Cardiac septum (tissue), 1 donor: ENCODE measurements at regions of chr3 and their contacts with region 1.

Region 1: DNA sequence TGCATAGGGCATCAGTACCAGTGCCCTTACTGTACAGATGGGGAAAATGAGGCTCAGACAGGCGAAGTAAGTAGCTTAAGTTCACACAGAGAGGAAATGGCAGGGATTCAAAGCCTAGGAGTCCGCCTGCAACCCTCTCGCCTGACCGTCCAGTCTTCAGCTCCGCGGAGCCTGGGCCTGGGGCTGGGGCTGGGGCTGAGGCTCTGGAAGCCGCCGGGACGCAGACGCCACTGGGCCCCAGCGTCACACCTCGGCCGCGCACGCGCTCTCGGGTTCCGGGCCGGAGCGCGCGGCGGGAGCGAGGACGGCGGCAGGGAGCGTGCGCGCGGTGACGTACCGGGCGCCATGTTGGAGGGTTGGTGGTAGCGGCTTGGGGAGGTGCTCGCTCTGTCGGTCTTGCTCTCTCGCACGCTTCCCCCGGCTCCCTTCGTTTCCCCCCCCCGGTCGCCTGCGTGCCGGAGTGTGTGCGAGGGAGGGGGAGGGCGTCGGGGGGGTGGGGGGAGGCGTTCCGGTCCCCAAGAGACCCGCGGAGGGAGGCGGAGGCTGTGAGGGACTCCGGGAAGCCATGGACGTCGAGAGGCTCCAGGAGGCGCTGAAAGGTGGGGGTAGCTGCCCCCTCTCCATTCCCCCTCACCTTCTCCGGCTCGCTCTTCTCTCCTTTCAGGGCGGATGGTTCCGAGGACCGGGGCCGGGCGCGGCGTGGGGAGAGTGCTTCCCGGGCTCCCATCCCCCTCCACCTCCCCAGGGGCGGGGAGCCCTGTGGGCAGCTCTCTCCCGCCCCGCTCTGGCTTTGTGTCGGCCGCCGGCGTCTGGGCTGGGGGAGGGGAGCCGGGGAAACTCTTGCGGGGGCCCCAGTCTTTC is at the start of gene PPP4R2:
- DNase-seq: peak; percentile 96
- total RNA-seq, gene PPP4R2: 46.6 TPM

Region 2: DNA sequence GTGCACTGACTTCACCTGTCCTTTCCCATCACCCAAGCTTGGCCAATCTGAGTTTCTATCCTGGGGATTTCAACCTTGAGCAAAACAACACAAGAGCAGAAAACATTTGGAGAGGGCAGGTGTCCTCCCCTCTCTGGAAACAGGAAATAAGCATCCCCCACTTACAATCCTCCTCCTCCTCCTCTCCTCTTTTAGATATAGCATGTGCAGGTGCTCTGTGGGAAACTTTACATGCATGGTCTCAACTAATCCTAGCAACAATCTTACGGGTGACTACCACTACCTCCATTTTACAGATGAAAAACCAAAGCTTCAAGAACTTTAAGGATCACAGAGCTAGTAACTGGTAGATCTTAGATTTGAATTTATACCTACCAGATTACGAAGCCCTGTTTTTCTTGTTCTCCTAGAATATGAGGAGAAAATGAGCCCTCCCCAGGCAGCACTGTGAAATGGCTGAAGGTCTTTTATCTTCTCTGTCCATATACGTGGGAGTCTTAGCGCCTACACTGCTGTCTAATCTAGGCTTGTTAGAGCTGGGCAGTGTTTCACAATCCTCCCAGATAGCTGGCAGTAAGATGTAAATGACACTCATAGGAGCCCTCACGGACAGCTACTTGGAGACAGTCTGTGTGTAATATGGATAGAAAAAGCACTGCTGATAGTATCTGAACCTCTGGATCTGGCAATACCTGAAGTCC is 910.5 kb before region 1 on chr3:
- intact Hi-C with region 1: no loop called
- DNase-seq: no peak

Region 3: DNA sequence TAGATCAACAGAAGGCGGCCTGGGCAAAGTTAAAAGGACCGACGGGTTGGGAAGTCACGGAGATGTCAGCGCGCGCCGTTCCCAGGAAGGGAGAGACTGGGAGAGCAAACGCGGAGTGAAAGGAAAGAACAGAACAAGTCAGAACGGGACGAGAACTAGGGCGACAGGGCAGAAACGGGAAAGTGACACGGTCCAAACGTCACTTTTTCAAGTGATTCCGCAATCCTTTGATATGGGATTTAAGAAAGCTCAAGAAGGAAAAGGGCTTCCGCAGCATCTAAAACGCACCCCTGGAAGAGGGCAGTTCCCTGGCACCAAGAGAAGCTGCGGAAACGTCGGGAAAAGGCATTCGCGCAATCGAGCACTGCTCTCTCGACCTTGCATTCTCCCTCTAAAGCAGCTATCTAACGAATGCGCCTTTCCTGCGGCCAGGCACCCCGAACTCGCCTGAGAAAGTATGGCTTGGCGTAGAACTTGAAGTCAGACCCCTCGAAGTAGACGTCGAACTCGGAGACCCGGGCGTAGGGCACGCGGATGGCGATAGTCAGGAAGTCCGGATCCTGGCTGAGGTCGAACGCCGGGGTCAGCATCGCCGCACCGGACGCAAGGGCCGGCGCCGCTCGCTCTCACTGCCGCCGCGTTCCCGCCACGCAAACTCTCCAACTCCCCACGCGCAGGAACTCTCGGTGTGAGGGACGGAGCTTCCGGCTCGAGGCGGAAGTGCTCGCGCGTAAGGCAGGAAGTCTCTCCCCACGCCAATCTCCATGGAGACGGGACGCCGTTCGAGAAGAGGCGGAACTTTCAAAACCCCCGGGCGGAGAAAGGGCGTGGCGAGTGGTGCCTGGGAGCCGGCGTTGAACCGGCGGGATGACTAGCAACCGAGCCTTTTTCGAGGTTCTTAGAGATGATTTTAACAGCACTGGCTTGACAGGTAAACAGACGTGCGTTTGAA is 148.7 kb before region 1 on chr3 and contains the start of gene SHQ1:
- intact Hi-C with region 1: loop called (anchors 5 kb)
- DNase-seq: peak; percentile 97
- total RNA-seq, gene SHQ1: 11.1 TPM

Region 4: DNA sequence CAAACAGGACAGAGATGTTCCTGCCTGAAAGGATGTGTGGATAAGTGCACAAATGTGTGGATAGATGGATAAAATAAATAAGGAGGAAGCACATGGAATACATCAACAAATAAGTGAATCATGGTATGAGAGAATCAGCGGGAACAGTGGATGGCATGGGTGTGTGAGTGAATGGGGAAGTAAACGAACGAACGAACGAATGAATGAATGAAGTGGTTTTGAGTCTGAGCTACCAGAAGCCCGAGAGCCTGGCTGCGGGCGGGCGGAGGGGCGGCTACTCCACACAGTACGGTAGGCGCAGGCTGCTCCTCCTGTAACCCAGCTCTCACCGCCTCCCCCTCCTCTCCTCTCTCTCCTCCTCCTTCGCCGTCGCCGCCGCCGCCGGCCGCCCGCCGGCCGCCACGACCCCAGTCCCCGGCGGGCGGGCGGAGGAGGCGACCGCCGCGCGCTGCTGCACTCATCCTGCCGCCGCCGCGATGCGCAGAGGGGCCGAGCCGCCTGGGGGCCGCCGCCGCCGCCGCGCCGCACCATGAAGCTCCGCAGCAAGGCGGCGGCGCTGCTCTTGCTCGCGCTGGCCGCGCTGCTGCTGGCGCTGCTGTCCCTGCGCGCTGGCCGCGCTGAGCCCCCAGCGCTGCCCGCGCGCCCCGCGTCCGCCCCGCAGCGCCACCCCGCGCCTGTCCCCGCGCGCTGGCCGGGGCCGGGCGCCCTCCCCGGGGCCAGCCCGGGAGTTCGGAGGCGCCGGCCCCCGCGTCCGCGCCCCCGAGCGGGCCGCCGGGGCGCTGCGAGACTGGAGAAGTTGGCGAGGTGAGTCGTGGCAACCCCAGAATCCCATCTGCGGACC is 108.8 kb before region 1 on chr3 and contains the start of gene GXYLT2:
- intact Hi-C with region 1: loop called (anchors 5 kb)
- DNase-seq: peak; percentile 82
- total RNA-seq, gene GXYLT2: 14.6 TPM

Region 5: GRCh38 chr3:72938471-72939265 is 58.0 kb before region 1 on chr3:
- intact Hi-C with region 1: loop called (anchors 2 kb)
- DNase-seq: no peak

Region 6: DNA sequence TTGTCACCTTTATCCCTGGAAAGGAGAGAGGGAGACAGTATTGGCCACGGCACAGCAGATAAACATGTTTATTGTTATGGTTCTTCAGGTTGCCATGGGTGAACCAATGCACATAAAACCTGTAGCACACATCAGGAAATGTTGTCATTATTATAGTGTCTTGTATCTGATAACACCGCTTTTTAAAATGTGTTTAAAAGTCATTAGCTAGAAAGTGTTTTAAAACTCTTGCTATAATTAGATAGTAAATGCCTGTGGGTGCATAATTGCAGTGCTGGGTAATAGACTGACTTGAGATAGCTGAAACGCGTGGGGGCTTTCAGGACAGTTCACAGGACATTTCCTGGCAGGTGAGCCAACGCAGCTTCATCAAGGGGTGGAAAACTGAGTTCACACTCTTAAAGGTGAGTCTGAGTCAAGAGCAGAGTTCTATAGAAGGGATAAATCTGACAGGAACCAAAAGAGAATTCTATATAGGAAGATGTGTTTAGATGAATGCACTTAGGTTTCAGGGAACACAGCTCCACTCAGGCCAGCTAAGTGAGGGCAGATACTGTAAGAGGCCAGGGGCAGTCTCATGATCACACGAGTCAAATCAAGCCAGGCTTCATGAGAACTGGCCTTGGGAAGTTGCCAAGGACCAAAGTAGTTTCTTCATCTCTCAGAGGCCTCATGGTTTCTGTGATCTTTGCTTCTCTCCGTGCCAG is 35.7 kb before region 1 on chr3:
- intact Hi-C with region 1: loop called (anchors 5 kb)
- DNase-seq: no peak

Region 7: GRCh38 chr3:73037369-73037699 is 40.6 kb after region 1 on chr3:
- intact Hi-C with region 1: loop called (anchors 5 kb)
- DNase-seq: no peak

Region 8: DNA sequence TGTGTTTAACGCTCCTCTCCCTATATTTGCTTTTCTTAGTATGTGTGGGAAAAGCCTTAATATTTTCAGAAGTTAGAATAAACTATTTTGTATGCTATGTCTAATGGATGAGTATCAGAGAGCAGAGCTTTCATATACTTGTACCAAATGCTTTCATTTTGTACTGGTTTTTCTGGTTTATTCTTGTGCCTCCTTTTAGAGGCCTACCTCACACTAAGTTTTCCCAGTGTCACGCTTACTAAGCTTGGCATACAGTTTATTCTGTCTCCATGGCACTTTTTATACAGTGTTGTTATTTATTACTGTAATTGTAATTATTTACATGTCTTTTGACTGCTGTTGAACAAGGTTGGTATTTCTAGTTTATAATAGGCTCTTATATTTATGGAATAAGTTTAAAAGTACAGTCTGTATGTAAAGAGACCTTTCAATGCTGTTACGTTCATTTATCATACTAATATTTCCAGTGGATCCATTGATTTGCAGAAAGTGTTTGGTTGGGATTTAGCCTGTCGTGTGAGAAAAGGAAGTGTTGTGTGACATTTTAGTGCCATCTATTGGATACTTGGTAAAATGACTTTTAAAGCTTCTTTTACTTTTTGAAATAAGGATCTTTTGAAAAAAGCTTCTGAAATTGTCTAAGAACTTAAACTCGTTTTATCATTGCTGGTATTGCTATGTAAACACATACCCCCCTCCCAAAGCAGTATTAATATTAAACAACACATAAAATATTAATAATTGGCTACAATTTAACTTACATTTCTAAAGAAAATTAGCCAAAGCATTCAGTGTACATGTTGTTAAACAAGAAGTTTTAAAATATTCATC is 59.5 kb after region 1 on chr3:
- intact Hi-C with region 1: loop called (anchors 5 kb)
- DNase-seq: no peak